ENCODE measurements at regions of chr4 and their contacts with region 1.

Region 1: DNA sequence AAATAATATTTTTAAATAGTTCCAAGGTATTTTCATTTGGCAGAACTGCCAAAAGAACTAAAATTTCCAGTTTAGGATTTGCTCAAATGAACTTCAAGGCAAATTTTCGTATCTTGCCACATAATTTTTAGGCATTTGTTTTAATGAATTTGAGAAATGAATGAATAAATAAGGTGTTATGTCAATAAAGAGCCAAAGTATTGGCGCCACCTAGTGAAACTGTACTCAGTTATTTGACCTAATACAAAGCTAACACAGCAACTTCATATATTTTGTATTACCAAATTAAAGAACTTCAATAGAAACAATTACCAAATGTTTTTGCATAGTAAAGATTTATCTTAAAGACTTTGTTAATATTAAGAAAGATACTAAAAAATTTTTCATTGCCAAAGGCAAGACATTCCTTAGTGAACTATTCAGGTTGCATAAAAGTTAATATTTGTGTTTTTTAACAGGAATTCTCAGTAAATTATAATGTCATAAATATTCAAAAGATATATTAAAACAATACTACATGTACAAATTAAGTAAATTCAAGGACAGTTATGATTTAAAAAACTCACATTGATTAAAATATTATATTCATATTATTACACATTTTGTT is 50.3 kb downstream of the STPG2 start:
- DNase-seq: no peak
- ATAC-seq: no peak
- H3K4me3 ChIP-seq: no peak overlapping the region
- H3K27ac ChIP-seq: no peak overlapping the region
- H3K4me1 ChIP-seq: no peaks in the 10 kb centered on the region
- H3K27me3 ChIP-seq: no peaks in the 10 kb centered on the region
- CTCF ChIP-seq: peak; percentile 46; the same call in 1 of the 2 replicates

Region 2: DNA sequence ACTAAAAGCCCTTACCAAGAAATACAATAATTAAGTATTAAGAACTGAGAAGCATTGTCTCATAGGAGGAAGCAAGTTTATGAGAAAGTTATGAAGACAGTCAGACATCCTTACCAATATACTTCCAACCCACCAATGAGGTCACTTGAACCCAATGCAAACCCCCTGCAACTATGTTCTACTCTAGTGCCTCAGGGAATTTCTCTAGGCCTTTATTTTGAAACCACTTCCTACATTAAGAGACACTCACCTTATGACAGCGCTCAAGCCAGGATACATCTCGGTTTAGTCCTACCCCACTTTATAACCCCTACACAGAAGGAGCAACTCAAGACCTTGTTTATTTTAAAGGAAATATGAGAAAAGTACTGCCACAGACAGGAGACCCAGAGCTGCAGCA is 11.0 kb before region 1 on chr4:
- CTCF ChIA-PET with region 1: no interaction called
- POLR2A ChIA-PET with region 1: interaction called, 16 read pairs
- in situ Hi-C with region 1: no loop called
- intact Hi-C with region 1: no loop called
- DNase-seq: no peak
- ATAC-seq: no peak
- H3K4me3 ChIP-seq: no peak overlapping the region
- H3K27ac ChIP-seq: no peak overlapping the region
- H3K4me1 ChIP-seq: no peaks in the 10 kb centered on the region
- H3K27me3 ChIP-seq: no peaks in the 10 kb centered on the region
- CTCF ChIP-seq: no peak

Measured in Panc1 (cell line).